CD14-positive monocyte (primary cell): ENCODE measurements at regions of chr7 and their contacts with region 1.

Region 1: GRCh38 chr7:27095897-27096767 is at the start of gene HOXA1:
- DNase-seq: peak; percentile 92 to 96 (median 94)
- H3K4me3 ChIP-seq: peak within 1 kb of the TSS; percentile 79 to 90 (median 88)
- H3K4me3 Mint-ChIP-seq: peak within 1 kb of the TSS; percentile 89 to 95
- H3K27ac ChIP-seq: peak within 1 kb of the TSS; percentile 82 to 92
- H3K27ac Mint-ChIP-seq: peak within 1 kb of the TSS; percentile 82 to 95 (median 93)
- H3K4me1 ChIP-seq: peaks cover 39 to 42% of the 10 kb centered on the region in 2 donors
- H3K4me1 Mint-ChIP-seq: peaks cover 51% of the 10 kb centered on the region
- H3K27me3 ChIP-seq: peaks cover 56 to 83% of the 10 kb centered on the region in 2 donors
- H3K27me3 Mint-ChIP-seq: peaks cover 74 to 88% (median 77%) of the 10 kb centered on the region in 3 donors
- CTCF ChIP-seq: no peak
- polyA plus RNA-seq, gene HOXA1: 0.11 to 0.37 TPM in 2 of 3 donors, not detected in the other

Region 2: DNA sequence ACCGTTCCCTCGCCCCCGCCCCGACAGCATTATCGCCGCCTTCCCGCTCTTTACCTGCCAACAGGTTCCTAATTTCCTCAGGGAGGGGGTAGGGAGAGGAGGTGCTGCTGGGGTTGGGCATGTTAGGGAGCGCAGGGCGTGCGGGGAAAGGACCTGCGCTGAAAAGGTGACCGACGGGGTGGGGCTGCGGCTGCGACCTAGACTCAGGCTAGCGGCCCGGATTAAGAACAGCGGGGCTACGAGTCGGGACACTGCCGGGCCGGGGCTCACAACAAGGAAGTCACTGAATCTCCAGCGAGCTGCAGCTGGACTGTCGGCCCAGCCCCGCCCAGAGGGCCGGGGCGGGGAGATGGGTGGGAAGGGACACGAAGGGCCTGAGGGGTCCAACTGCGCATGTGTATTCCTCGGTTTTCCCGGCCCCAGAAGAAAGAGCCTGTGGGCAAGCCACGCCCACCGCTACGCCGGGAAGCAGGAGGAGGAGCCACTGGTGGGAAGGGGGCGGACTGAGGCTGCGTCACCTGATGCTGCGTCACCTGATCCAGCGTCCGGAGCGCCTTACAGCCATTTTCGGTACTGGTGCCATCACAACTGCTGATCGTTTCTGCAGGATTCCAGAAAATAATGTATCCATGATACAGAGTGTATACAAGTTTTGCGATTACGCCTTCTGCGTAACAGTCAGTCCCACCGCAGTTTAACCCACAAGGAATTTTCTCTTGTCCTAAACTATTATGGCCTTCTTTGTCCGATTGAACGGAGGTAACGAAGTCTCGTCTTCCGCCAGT is 231.6 kb before region 1 on chr7 and contains the start of gene SKAP2:
- intact Hi-C with region 1: loop called (anchors 2 to 5 kb)
- DNase-seq: peak; percentile 98 to 99 (median 99)
- H3K4me3 ChIP-seq: peak within 1 kb of the TSS; percentile 71 to 97 (median 75)
- H3K4me3 Mint-ChIP-seq: peak within 1 kb of the TSS; percentile 97 to 99
- H3K27ac ChIP-seq: peak within 1 kb of the TSS; percentile 91 to 95
- H3K27ac Mint-ChIP-seq: peak within 1 kb of the TSS; percentile 97 to 100 (median 99)
- H3K4me1 ChIP-seq: peaks cover 7 to 43% of the 10 kb centered on the region in 2 donors
- H3K4me1 Mint-ChIP-seq: peaks cover 33% of the 10 kb centered on the region
- H3K27me3 ChIP-seq: no peaks in the 10 kb centered on the region
- H3K27me3 Mint-ChIP-seq: peaks cover 0 to 6% (median 4%) of the 10 kb centered on the region in 3 donors
- CTCF ChIP-seq: no peak
- polyA plus RNA-seq, gene SKAP2: 19.2 to 204 (median 158) TPM

Region 3: DNA sequence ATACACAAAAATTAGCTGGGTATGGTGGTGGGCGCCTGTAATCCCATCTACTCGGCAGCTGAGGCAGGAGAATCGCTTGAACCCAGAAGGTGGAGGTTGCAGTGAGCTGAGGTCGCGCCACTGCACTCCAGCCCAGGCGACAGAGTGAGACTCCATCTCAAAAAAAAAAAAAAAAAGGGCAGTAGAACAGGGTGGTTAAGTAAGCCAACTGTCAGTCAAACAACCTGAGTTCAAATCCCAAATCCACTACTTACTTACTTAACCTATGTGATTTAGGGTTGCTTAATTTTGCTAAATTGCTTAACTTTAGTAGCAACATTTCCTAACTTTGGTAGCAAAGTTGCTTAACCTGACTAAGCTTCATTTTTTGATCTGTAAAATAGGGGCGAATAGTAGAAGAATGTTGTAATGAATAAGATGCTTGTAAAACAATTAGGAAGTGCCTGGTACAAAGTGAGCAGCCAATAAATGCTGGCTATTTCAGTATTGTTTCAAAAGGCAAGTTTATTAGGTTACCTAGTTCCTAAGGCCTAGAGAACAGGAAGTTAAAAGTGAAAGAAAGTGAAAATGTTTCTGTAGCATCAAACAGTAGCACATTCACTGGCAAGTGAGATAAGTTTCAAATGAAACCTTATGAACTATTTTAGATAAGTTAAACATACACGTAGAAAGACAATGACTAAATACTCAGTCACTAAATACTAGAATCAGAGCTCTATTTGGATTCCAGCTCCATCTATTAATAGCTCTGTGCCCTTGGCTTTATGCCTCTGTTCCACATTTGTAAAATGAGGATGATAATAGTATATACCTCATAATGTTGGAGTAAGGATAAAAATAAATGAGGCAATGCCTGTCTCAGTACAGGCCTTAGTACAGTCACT is 64.6 kb before region 1 on chr7:
- intact Hi-C with region 1: loop called (anchors 10 kb)
- DNase-seq: peak; percentile 48 to 76 (median 60)
- H3K4me3 ChIP-seq: peak overlapping the region in 2 of 3 experiments; percentile 17 to 53
- H3K4me3 Mint-ChIP-seq: peak overlapping the region in 1 of 2 donors; percentile 56
- H3K27ac ChIP-seq: peak overlapping the region; percentile 17 to 75
- H3K27ac Mint-ChIP-seq: peak overlapping the region; percentile 62 to 91 (median 83)
- H3K4me1 ChIP-seq: peaks cover 13 to 22% of the 10 kb centered on the region in 2 donors
- H3K4me1 Mint-ChIP-seq: peaks cover 25% of the 10 kb centered on the region
- H3K27me3 ChIP-seq: no peaks in the 10 kb centered on the region
- H3K27me3 Mint-ChIP-seq: peaks cover 0 to 2% (median 2%) of the 10 kb centered on the region in 3 donors
- CTCF ChIP-seq: no peak

Region 4: DNA sequence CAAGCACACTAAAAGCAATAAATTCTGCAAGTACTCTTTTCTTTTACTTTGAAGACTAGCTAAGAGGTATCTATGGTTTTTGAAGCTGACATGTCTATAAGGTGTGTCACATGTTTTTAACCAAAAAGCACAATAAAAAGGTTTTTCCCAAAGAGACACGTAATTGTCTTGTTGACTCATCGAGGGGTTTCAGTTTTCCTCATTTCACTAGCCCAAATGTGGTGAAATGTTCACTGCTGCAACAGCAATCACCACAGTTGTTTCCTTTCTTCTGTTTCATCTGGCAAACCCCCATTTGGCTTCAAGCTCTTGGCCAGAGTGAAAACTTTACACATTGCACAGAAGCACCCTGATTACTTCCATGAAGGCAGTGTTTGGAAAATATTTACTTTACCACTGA is 38.3 kb after region 1 on chr7:
- intact Hi-C with region 1: loop called in 1 of 2 experiments (anchors 2 kb)
- DNase-seq: peak in 2 of 3 donors; percentile 54 to 86
- H3K4me3 ChIP-seq: no peak overlapping the region
- H3K4me3 Mint-ChIP-seq: peak overlapping the region in 1 of 2 donors; percentile 22
- H3K27ac ChIP-seq: no peak overlapping the region
- H3K27ac Mint-ChIP-seq: no peak overlapping the region
- H3K4me1 ChIP-seq: peaks cover 16 to 36% of the 10 kb centered on the region in 2 donors
- H3K4me1 Mint-ChIP-seq: peaks cover 41% of the 10 kb centered on the region
- H3K27me3 ChIP-seq: peaks cover 12 to 25% of the 10 kb centered on the region in 2 donors
- H3K27me3 Mint-ChIP-seq: peaks cover 6 to 24% (median 10%) of the 10 kb centered on the region in 3 donors
- CTCF ChIP-seq: no peak

Region 5: DNA sequence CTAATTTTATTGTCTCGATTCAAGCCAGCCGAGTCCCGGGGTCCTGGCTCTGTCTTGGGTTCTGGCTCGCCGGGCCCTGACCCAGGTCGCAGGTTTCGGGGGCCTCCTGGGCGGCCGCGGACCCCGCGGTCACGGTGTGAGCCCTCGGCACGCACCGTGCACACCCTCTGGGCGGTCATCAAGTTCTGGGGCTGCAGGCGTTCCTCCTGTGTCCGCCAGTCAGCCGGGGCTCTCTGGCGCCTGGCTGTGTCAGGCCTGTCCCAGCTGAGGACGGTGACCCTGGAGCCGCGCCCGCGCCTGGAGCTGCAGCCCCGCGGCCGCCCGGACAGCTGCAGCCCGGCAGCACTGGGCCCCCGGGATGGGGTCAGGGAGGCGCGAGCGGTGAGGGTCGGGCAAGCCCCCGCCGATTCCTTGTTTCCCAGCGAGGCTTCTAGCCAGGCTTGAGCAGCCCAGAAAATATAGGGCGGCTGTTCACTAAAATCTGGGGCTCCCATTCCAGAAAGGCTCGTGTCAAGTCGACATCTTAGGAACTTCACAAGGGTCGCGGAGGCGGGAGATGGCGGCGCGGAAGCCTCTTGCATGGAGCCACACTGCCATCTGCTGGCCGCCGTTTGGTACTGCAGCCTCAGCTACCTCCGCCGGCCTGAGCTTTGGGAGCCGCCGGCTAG is 64.5 kb after region 1 on chr7:
- intact Hi-C with region 1: loop called in 1 of 2 experiments (anchors 5 kb)
- DNase-seq: peak; percentile 70 to 84 (median 78)
- H3K4me3 ChIP-seq: peak overlapping the region; percentile 53 to 94 (median 79)
- H3K4me3 Mint-ChIP-seq: peak overlapping the region; percentile 86
- H3K27ac ChIP-seq: peak overlapping the region in 1 of 2 donors; percentile 52
- H3K27ac Mint-ChIP-seq: peak overlapping the region in 5 of 7 donors; percentile 14 to 80 (median 30)
- H3K4me1 ChIP-seq: peaks cover 60 to 77% of the 10 kb centered on the region in 2 donors
- H3K4me1 Mint-ChIP-seq: peaks cover 67% of the 10 kb centered on the region
- H3K27me3 ChIP-seq: peaks cover 61 to 92% of the 10 kb centered on the region in 2 donors
- H3K27me3 Mint-ChIP-seq: peaks cover 84 to 93% (median 85%) of the 10 kb centered on the region in 3 donors
- CTCF ChIP-seq: peak; percentile 100